CD4-positive, alpha-beta T cell (primary cell): ENCODE measurements at regions of chr7 and their contacts with region 1.

Region 1: GRCh38 chr7:77657427-77658224 is 38.6 kb upstream of the RSBN1L start:
- DNase-seq: peak in 4 of 14 experiments; percentile 29 to 66 (median 64)
- ATAC-seq: peak; percentile 54
- H3K4me3 ChIP-seq: no peak overlapping the region
- H3K4me3 Mint-ChIP-seq: no peak overlapping the region
- H3K27ac ChIP-seq: no peak overlapping the region
- H3K27ac Mint-ChIP-seq: no peak overlapping the region
- H3K4me1 ChIP-seq: no peaks in the 10 kb centered on the region
- H3K4me1 Mint-ChIP-seq: no peaks in the 10 kb centered on the region
- H3K27me3 ChIP-seq: no peaks in the 10 kb centered on the region
- H3K27me3 Mint-ChIP-seq: no peaks in the 10 kb centered on the region
- CTCF ChIP-seq: peak; percentile 83

Region 2: GRCh38 chr7:77696198-77697028 is 38.8 kb after region 1 on chr7 and contains the start of gene RSBN1L:
- CTCF ChIA-PET with region 1: interaction called, 5 read pairs
- POLR2A ChIA-PET with region 1: interaction called, 7 read pairs
- intact Hi-C with region 1: loop called in 1 of 2 experiments (anchors 2 kb)
- DNase-seq: peak; percentile 95 to 99 (median 98)
- ATAC-seq: peak; percentile 95
- H3K4me3 ChIP-seq: peak within 1 kb of the TSS; percentile 100
- H3K4me3 Mint-ChIP-seq: peak within 1 kb of the TSS; percentile 100
- H3K27ac ChIP-seq: peak within 1 kb of the TSS; percentile 90 to 92
- H3K27ac Mint-ChIP-seq: peak within 1 kb of the TSS; percentile 99
- H3K4me1 ChIP-seq: peaks cover 24% of the 10 kb centered on the region
- H3K4me1 Mint-ChIP-seq: peaks cover 72% of the 10 kb centered on the region
- H3K27me3 ChIP-seq: no peaks in the 10 kb centered on the region
- H3K27me3 Mint-ChIP-seq: no peaks in the 10 kb centered on the region
- CTCF ChIP-seq: peak; percentile 55
- total RNA-seq, gene RSBN1L: 9.0 to 9.6 TPM

Region 3: DNA sequence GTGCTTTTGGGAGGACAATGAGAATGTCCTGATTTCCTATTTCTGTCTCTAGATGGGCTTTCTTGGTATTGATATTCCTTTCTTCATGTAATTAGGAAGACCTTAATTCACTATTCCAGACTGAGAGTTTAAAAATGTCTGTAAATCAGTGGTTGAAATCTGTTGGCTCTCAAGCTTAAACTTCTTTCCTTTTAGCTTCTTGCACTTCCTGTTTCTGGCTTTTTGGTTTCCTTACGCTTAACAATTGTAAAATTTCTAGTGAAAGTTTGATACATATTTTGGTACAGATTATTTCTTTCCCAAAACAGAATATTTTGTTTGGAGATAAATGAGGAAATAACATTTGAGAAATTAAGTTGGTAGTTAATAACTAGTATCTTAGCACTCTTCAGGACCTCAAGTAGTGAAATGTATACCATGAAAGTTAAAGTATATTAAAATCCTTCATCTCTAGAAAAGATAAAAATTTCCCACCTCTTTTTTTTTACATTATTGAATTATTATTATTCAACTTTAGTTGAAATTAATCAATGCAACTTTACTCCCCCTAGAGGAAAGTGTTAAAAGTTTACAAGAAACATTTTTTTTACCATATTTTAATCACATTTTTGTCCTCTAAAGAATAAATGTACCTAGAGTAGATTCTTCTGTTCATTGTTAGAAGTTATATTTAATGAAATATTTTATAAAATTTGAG is 278.2 kb after region 1 on chr7:
- CTCF ChIA-PET with region 1: no interaction called
- POLR2A ChIA-PET with region 1: no interaction called
- intact Hi-C with region 1: loop called (anchors 5 kb)
- DNase-seq: no peak
- ATAC-seq: no peak
- H3K4me3 ChIP-seq: no peak overlapping the region
- H3K4me3 Mint-ChIP-seq: no peak overlapping the region
- H3K27ac ChIP-seq: no peak overlapping the region
- H3K27ac Mint-ChIP-seq: peak overlapping the region; percentile 29
- H3K4me1 ChIP-seq: peaks cover 4% of the 10 kb centered on the region
- H3K4me1 Mint-ChIP-seq: peaks cover 16% of the 10 kb centered on the region
- H3K27me3 ChIP-seq: no peaks in the 10 kb centered on the region
- H3K27me3 Mint-ChIP-seq: no peaks in the 10 kb centered on the region
- CTCF ChIP-seq: peak; percentile 63

Region 4: DNA sequence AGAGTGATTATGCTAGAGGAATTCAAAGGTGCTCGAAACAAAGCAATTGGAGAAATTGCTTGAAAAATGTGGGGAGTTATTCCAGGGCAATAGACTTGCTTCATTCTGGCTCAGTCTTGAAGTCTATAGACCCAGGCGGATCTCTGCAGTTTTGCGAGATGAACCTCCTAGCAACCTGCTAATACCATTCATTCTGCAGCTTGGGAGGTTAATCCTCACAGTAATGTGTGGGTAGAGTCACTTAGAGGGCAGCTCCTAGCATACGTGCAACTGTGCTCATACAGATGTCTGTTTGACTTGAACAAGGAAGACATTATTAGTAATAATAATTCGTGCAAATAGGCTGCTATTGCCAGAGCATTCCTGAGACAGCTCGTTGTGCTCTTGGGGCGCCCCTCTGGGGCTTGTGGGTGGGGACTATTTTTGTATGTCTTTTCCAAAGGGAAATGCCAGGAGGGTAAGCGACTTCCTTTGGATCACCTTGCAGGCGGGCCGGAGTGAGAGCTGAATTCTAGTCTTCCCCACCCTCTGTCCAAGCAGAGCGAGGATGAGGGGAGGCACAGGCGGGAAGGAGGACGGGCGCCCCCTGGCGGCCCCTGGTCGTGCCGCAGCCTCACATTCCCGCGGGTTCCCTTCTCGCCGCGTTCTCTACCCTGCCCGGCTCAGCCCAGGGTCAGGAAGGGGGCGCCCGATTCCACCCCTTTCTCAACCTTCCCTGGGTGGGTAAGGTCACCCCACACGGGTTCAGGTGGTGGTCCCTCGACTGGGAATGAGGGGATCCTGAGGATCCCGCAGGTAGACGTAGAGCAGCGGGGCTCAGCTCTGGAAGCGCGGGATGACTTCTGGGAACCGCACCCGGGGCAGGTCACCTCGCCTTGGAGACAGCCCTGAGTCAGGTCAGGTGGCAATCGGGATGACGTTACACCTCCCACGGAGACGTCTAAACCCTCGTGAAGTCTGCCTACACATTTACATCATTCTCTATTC is 382.5 kb after region 1 on chr7:
- CTCF ChIA-PET with region 1: no interaction called
- POLR2A ChIA-PET with region 1: no interaction called
- intact Hi-C with region 1: loop called (anchors 2 to 5 kb)
- DNase-seq: peak in 12 of 14 experiments; percentile 26 to 72 (median 42)
- ATAC-seq: peak; percentile 60
- H3K4me3 ChIP-seq: no peak overlapping the region
- H3K4me3 Mint-ChIP-seq: no peak overlapping the region
- H3K27ac ChIP-seq: no peak overlapping the region
- H3K27ac Mint-ChIP-seq: no peak overlapping the region
- H3K4me1 ChIP-seq: peaks cover 6% of the 10 kb centered on the region
- H3K4me1 Mint-ChIP-seq: no peaks in the 10 kb centered on the region
- H3K27me3 ChIP-seq: peaks cover 5 to 8% of the 10 kb centered on the region in 2 experiments
- H3K27me3 Mint-ChIP-seq: peaks cover 67% of the 10 kb centered on the region
- CTCF ChIP-seq: peak; percentile 75